ENCODE measurements at regions of chr3 and their contacts with region 1.

Region 1: GRCh38 chr3:44861412-44862220 is at the start of gene TMEM42:
- DNase-seq: peak; percentile 95
- H3K4me3 ChIP-seq: peak within 1 kb of the TSS; percentile 62 to 80 (median 71)
- H3K27ac ChIP-seq: peak within 1 kb of the TSS; percentile 93 to 96 (median 94)
- H3K4me1 ChIP-seq: peaks cover 0 to 13% (median 8%) of the 10 kb centered on the region in 4 donors
- H3K27me3 ChIP-seq: no peaks in the 10 kb centered on the region
- CTCF ChIP-seq: no peak
- EP300 ChIP-seq: no peak
- POLR2A ChIP-seq: peak; percentile 61 to 62
- total RNA-seq, gene TMEM42: 8.3 to 25.7 (median 10.4) TPM

Region 2: DNA sequence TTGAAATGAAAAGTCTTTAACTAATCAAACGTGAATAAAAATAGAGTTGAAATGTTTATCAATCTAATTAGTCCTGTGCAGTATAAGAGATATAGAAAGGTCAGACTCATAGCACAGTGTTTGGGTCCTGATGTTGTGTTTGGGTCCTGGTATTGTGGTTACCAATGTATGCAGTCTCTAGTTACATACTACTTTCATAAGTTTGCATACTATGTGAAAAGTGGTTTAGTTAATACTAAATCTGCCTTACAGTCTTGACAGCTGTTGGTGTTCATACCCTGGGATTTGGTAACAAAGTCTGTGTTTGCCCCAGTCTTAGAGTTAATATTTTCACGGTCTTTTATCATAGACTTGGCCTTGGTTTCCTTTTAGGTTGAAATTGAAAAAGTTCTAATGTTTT is 58.3 kb before region 1 on chr3:
- intact Hi-C with region 1: no loop called
- DNase-seq: no peak
- H3K4me3 ChIP-seq: no peak overlapping the region
- H3K27ac ChIP-seq: no peak overlapping the region
- H3K4me1 ChIP-seq: no peaks in the 10 kb centered on the region
- H3K27me3 ChIP-seq: no peaks in the 10 kb centered on the region
- CTCF ChIP-seq: no peak
- EP300 ChIP-seq: no peak
- POLR2A ChIP-seq: no peak

Region 3: DNA sequence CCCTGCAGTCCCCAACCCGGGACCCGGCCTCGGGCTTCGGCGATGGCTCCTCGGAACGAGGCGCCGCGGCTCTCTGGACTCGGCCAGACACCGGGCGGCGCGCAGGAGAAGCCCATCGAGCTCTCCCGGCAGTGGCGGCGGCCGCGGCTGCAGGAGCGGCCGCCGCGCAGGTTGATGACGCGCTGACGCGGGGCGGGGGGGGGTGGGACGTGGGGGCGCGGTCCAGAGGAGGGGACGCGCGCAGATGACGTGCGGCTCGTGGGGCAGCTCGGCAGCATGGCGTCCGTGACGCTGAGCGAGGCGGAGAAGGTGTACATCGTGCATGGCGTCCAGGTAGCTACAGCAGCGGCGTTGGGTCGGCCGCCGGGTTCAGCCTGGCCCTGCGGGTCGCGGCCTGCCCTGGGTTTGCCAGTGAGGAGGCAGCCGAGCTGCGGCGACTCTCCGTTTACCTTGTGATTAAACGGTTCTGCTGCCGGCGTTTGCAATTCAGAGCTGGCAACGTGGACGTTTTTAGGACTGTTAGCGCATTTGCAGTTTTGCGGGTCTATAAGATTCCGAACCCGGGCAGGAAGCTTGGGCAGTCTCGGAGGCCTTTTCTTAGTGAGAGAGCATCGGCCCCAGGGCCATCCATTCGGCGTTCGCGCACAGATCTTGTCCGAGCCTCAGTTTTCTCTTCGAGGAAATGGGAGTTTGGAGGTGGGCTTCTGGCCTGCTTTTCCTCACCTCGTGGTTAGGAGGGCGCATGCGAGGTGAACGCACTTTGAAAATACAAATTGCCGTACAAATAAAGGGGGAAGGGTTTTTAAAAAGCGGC is 114.6 kb after region 1 on chr3 and contains the starts of genes EXOSC7 and ZDHHC3:
- intact Hi-C with region 1: loop called (anchors 5 kb)
- DNase-seq: peak; percentile 93
- H3K4me3 ChIP-seq: peak within 1 kb of the TSS; percentile 76 to 98 (median 98)
- H3K27ac ChIP-seq: peak within 1 kb of the TSS; percentile 85 to 95 (median 94)
- H3K4me1 ChIP-seq: peaks cover 0 to 48% (median 30%) of the 10 kb centered on the region in 4 donors
- H3K27me3 ChIP-seq: no peaks in the 10 kb centered on the region
- CTCF ChIP-seq: no peak
- EP300 ChIP-seq: no peak
- POLR2A ChIP-seq: peak; percentile 18 to 44
- total RNA-seq, gene EXOSC7: 26.9 to 44.3 (median 34.9) TPM
- total RNA-seq, gene ZDHHC3: 43.2 to 62.9 (median 46.3) TPM